ENCODE measurements at regions of chr15 and their contacts with region 1.

Region 1: GRCh38 chr15:72796515-72797337 is 13.2 kb upstream of the ADPGK start:
- DNase-seq: peak in 1 of 2 donors; percentile 46
- ATAC-seq: peak; percentile 90 to 93
- H3K4me3 ChIP-seq: peak overlapping the region; percentile 57 to 64 (median 60)
- H3K27ac ChIP-seq: peak overlapping the region; percentile 38 to 74 (median 61)
- H3K4me1 ChIP-seq: peaks cover 0 to 10% of the 10 kb centered on the region in 2 donors
- H3K27me3 ChIP-seq: no peaks in the 10 kb centered on the region
- CTCF ChIP-seq: peak; percentile 57 to 89 (median 86)
- POLR2A ChIP-seq: no peak

Region 2: DNA sequence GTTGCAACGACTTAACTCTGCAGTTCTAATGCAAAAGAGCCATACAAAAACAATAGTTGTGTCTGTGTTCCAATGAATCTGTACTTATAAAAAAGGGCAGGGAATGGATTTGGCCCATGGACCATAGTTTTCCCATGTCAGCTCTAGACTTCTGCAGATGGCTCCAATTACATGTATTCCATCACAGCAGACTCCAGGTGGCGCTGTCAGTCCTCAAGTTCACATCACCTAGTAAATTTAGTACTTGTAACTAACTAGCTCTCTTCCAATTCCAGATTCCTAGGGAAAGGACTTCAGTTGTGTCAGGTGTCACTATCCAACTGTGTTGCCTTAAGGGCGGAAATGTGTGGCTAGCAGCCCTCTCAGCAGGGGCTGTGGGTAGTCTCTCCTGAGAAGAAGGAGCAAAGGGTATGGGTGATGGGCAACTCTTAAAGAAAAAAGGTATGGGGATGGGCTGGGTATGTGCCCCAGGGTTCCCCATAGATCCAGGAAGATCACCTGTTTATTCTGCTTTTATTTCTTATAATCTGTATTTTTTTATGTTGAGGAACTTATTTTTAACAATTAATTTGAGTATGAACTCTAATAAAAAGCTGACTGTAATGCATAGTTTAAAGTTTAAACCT is 74.5 kb before region 1 on chr15:
- in situ Hi-C with region 1: no loop called
- intact Hi-C with region 1: loop called (anchors 5 kb)
- DNase-seq: peak; percentile 2 to 66
- ATAC-seq: peak in 1 of 2 donors; percentile 76
- H3K4me3 ChIP-seq: no peak overlapping the region
- H3K27ac ChIP-seq: no peak overlapping the region
- H3K4me1 ChIP-seq: peaks cover 4 to 9% of the 10 kb centered on the region in 2 donors
- H3K27me3 ChIP-seq: no peaks in the 10 kb centered on the region
- CTCF ChIP-seq: peak; percentile 56 to 74 (median 58)
- POLR2A ChIP-seq: no peak

Region 3: GRCh38 chr15:72835294-72835890 is 38.7 kb after region 1 on chr15:
- in situ Hi-C with region 1: no loop called
- intact Hi-C with region 1: loop called (anchors 5 kb)
- DNase-seq: peak in 1 of 2 donors; percentile 39
- ATAC-seq: peak in 1 of 2 donors; percentile 24
- H3K4me3 ChIP-seq: no peak overlapping the region
- H3K27ac ChIP-seq: peak overlapping the region; percentile 84 to 93 (median 89)
- H3K4me1 ChIP-seq: peaks cover 28 to 57% of the 10 kb centered on the region in 2 donors
- H3K27me3 ChIP-seq: no peaks in the 10 kb centered on the region
- CTCF ChIP-seq: peak in 4 of 5 experiments; percentile 23 to 50 (median 38)
- POLR2A ChIP-seq: no peak

Region 4: GRCh38 chr15:72902245-72902918 is 105.7 kb after region 1 on chr15:
- in situ Hi-C with region 1: no loop called
- intact Hi-C with region 1: loop called (anchors 10 kb)
- DNase-seq: peak; percentile 12 to 50
- ATAC-seq: peak; percentile 74 to 86
- H3K4me3 ChIP-seq: no peak overlapping the region
- H3K27ac ChIP-seq: peak overlapping the region in 1 of 4 donors; percentile 56
- H3K4me1 ChIP-seq: peaks cover 12 to 18% of the 10 kb centered on the region in 2 donors
- H3K27me3 ChIP-seq: no peaks in the 10 kb centered on the region
- CTCF ChIP-seq: no peak
- POLR2A ChIP-seq: no peak

Region 5: GRCh38 chr15:73051811-73052678 is 255.3 kb after region 1 on chr15 and contains the start of gene NEO1:
- in situ Hi-C with region 1: no loop called
- intact Hi-C with region 1: loop called (anchors 1 kb)
- DNase-seq: peak; percentile 81 to 89
- ATAC-seq: peak; percentile 72 to 77
- H3K4me3 ChIP-seq: peak within 1 kb of the TSS; percentile 93 to 99 (median 97)
- H3K27ac ChIP-seq: peak within 1 kb of the TSS; percentile 98 to 99 (median 98)
- H3K4me1 ChIP-seq: peaks cover 16 to 40% of the 10 kb centered on the region in 2 donors
- H3K27me3 ChIP-seq: no peaks in the 10 kb centered on the region
- CTCF ChIP-seq: no peak
- POLR2A ChIP-seq: peak; percentile 51 to 61
- total RNA-seq, gene NEO1: 13.8 to 32.0 (median 20.3) TPM

Region 6: DNA sequence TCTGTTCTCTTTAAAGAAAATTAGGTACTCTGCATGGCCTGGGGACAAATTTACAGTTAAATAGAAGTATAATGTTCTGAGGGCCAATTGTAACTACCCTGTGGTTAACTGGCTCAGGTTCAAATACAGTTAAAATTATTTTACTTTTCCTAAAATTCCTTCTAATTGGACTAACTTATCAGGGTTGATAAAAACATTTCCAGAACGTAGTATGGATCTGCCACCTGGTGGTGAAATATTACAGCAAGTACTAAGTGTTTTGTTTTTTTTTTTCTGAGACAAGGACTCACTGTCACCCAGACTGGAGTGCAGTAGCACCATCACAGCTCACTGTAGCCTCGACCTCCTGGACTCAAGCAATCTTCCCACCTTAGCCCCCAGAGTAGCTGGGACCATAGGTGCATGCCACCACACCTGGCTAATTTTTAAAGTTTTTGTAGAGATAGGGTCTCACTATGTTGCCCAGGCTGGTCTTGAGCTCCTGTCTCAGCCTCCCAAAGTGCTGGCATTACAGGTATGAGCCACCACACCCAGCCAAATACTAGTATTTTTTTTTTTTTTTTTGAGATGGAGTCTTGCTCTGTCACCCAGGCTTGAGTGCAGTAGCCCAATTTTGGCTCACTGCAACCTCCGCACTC is 284.7 kb after region 1 on chr15:
- in situ Hi-C with region 1: loop called in 3 of 4 experiments (anchors 5 to 10 kb)
- intact Hi-C with region 1: loop called (anchors 1 kb)
- DNase-seq: no peak
- ATAC-seq: peak; percentile 65 to 79
- H3K4me3 ChIP-seq: no peak overlapping the region
- H3K27ac ChIP-seq: no peak overlapping the region
- H3K4me1 ChIP-seq: peaks cover 29 to 35% of the 10 kb centered on the region in 2 donors
- H3K27me3 ChIP-seq: no peaks in the 10 kb centered on the region
- CTCF ChIP-seq: peak; percentile 63 to 84 (median 73)
- POLR2A ChIP-seq: no peak

Region 7: GRCh38 chr15:73273181-73274002 is 476.7 kb after region 1 on chr15:
- in situ Hi-C with region 1: no loop called
- intact Hi-C with region 1: loop called (anchors 5 kb)
- DNase-seq: peak; percentile 5 to 48
- ATAC-seq: peak; percentile 69 to 88
- H3K4me3 ChIP-seq: no peak overlapping the region
- H3K27ac ChIP-seq: no peak overlapping the region
- H3K4me1 ChIP-seq: peaks cover 0 to 1% of the 10 kb centered on the region in 2 donors
- H3K27me3 ChIP-seq: no peaks in the 10 kb centered on the region
- CTCF ChIP-seq: peak; percentile 46 to 80 (median 57)
- POLR2A ChIP-seq: no peak

Region 8: DNA sequence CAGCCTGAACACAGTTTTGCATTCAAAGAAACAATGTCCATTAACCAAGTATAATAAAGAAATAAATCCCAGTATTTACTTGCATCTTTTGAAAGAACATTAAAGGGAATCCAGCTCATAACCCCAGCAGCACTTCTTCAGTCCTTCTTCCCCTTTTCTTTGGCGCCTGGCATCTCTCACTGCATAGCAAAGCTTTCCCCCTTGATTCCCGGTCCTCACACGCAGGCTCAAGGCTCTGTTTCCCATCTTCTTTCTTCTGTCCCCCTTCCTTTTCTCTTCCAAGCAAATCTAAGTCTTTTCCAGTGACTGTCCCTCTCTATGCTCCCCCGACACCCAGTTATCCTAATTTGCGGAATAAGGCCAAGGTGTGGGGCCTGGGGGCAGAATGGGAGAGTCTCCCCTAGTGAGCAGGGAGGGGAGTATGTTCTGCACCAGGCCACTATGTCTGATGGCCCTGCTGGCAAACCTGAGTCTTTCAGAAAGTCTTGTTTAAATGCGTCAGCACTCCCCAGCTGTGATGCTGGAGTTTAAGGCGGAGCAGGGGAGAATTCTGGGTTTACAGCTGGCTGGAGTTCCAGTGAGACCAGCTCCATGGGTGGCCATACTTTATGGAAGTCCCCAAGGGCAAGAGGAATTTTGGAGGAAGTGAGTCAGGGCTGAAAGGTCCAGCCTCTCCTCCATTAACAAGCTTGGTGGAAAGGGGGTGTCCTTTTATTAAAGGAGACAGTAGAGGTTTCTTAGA is 1243.6 kb after region 1 on chr15:
- in situ Hi-C with region 1: no loop called
- intact Hi-C with region 1: no loop called
- DNase-seq: peak; percentile 25 to 59
- ATAC-seq: peak; percentile 61 to 68
- H3K4me3 ChIP-seq: no peak overlapping the region
- H3K27ac ChIP-seq: peak overlapping the region; percentile 42 to 65 (median 58)
- H3K4me1 ChIP-seq: peaks cover 5 to 10% of the 10 kb centered on the region in 2 donors
- H3K27me3 ChIP-seq: no peaks in the 10 kb centered on the region
- CTCF ChIP-seq: no peak
- POLR2A ChIP-seq: no peak